CD4-positive, alpha-beta T cell (primary cell): ENCODE measurements at regions of chr6 and their contacts with region 1.

Region 1: DNA sequence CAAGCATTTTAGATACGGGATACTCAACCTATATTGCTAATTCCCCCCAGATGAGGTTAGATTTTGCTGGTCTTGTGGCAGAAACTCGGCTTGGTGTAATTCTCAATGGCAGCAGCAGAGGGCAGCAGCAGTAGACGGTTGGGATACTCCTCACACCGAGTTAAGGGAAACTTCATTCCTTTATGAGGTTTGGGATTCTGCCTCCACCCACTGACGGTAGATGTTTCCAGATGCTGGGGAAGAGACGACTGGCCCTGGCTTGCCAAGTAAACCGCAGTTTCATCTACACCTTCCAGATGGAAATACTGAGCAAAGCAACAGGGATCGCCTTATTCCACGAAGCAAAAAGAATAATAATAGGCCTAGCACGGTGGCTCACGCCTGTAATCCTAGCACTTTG is 8.2 kb upstream of the TBC1D7 start:
- DNase-seq: peak; percentile 54 to 84 (median 70)
- ATAC-seq: peak; percentile 87
- H3K4me3 ChIP-seq: no peak overlapping the region
- H3K4me3 Mint-ChIP-seq: no peak overlapping the region
- H3K27ac ChIP-seq: no peak overlapping the region
- H3K27ac Mint-ChIP-seq: no peak overlapping the region
- H3K4me1 ChIP-seq: peaks cover 6% of the 10 kb centered on the region
- H3K4me1 Mint-ChIP-seq: peaks cover 10% of the 10 kb centered on the region
- H3K27me3 ChIP-seq: no peaks in the 10 kb centered on the region
- H3K27me3 Mint-ChIP-seq: no peaks in the 10 kb centered on the region
- CTCF ChIP-seq: peak; percentile 93

Region 2: GRCh38 chr6:13355043-13355951 is 18.7 kb after region 1 on chr6:
- CTCF ChIA-PET with region 1: no interaction called
- POLR2A ChIA-PET with region 1: interaction called, 3 read pairs
- intact Hi-C with region 1: loop called in 1 of 2 experiments (anchors 1 kb)
- DNase-seq: peak in 4 of 14 experiments; percentile 20 to 73 (median 58)
- ATAC-seq: peak; percentile 69
- H3K4me3 ChIP-seq: peak overlapping the region; percentile 43
- H3K4me3 Mint-ChIP-seq: peak overlapping the region; percentile 81
- H3K27ac ChIP-seq: peak overlapping the region; percentile 60 to 65
- H3K27ac Mint-ChIP-seq: peak overlapping the region; percentile 89
- H3K4me1 ChIP-seq: peaks cover 30% of the 10 kb centered on the region
- H3K4me1 Mint-ChIP-seq: peaks cover 41% of the 10 kb centered on the region
- H3K27me3 ChIP-seq: no peaks in the 10 kb centered on the region
- H3K27me3 Mint-ChIP-seq: no peaks in the 10 kb centered on the region
- CTCF ChIP-seq: no peak

Region 3: GRCh38 chr6:13375360-13375878 is 38.9 kb after region 1 on chr6:
- CTCF ChIA-PET with region 1: no interaction called
- POLR2A ChIA-PET with region 1: no interaction called
- intact Hi-C with region 1: no loop called
- DNase-seq: peak in 5 of 14 experiments; percentile 5 to 57 (median 16)
- ATAC-seq: peak; percentile 37
- H3K4me3 ChIP-seq: no peak overlapping the region
- H3K4me3 Mint-ChIP-seq: no peak overlapping the region
- H3K27ac ChIP-seq: no peak overlapping the region
- H3K27ac Mint-ChIP-seq: no peak overlapping the region
- H3K4me1 ChIP-seq: peaks cover 8% of the 10 kb centered on the region
- H3K4me1 Mint-ChIP-seq: peaks cover 4% of the 10 kb centered on the region
- H3K27me3 ChIP-seq: no peaks in the 10 kb centered on the region
- H3K27me3 Mint-ChIP-seq: no peaks in the 10 kb centered on the region
- CTCF ChIP-seq: no peak

Region 4: GRCh38 chr6:13454286-13455221 is 118.0 kb after region 1 on chr6:
- CTCF ChIA-PET with region 1: no interaction called
- POLR2A ChIA-PET with region 1: no interaction called
- intact Hi-C with region 1: loop called (anchors 2 to 10 kb)
- DNase-seq: peak; percentile 25 to 86 (median 58)
- ATAC-seq: peak; percentile 81
- H3K4me3 ChIP-seq: peak overlapping the region; percentile 12
- H3K4me3 Mint-ChIP-seq: peak overlapping the region; percentile 60
- H3K27ac ChIP-seq: peak overlapping the region; percentile 1 to 6
- H3K27ac Mint-ChIP-seq: peak overlapping the region; percentile 88
- H3K4me1 ChIP-seq: peaks cover 21% of the 10 kb centered on the region
- H3K4me1 Mint-ChIP-seq: peaks cover 27% of the 10 kb centered on the region
- H3K27me3 ChIP-seq: no peaks in the 10 kb centered on the region
- H3K27me3 Mint-ChIP-seq: no peaks in the 10 kb centered on the region
- CTCF ChIP-seq: peak; percentile 57

Region 5: DNA sequence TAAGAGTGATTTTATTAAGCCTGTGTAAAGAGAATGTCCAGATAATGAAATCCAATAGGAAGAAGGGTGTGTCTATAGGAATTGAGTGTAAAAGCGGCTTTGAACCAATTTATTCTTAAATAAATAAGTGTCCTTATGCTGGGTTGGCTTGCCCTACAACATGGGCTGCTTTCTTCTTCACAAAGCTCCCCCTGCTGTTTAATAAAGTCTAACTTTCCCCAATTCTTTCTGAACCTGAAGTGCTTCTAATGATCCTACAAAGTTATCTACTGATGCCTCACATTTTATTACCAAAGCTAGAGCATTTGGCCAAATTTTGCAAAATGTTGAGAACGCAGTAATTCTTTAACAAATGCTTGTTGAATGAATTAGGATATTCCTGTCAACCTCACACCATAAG is 201.5 kb after region 1 on chr6:
- CTCF ChIA-PET with region 1: no interaction called
- POLR2A ChIA-PET with region 1: no interaction called
- intact Hi-C with region 1: loop called (anchors 1 kb)
- DNase-seq: peak in 4 of 14 experiments; percentile 10 to 55 (median 49)
- ATAC-seq: no peak
- H3K4me3 ChIP-seq: no peak overlapping the region
- H3K4me3 Mint-ChIP-seq: no peak overlapping the region
- H3K27ac ChIP-seq: no peak overlapping the region
- H3K27ac Mint-ChIP-seq: no peak overlapping the region
- H3K4me1 ChIP-seq: no peaks in the 10 kb centered on the region
- H3K4me1 Mint-ChIP-seq: no peaks in the 10 kb centered on the region
- H3K27me3 ChIP-seq: no peaks in the 10 kb centered on the region
- H3K27me3 Mint-ChIP-seq: no peaks in the 10 kb centered on the region
- CTCF ChIP-seq: peak; percentile 60

Region 6: GRCh38 chr6:14066782-14067406 is 730.3 kb after region 1 on chr6:
- CTCF ChIA-PET with region 1: interaction called, 3 read pairs
- POLR2A ChIA-PET with region 1: no interaction called
- intact Hi-C with region 1: loop called (anchors 1 to 10 kb)
- DNase-seq: peak in 4 of 14 experiments; percentile 24 to 76 (median 70)
- ATAC-seq: peak; percentile 81
- H3K4me3 ChIP-seq: no peak overlapping the region
- H3K4me3 Mint-ChIP-seq: no peak overlapping the region
- H3K27ac ChIP-seq: no peak overlapping the region
- H3K27ac Mint-ChIP-seq: no peak overlapping the region
- H3K4me1 ChIP-seq: no peaks in the 10 kb centered on the region
- H3K4me1 Mint-ChIP-seq: no peaks in the 10 kb centered on the region
- H3K27me3 ChIP-seq: peaks cover 0 to 5% of the 10 kb centered on the region in 2 experiments
- H3K27me3 Mint-ChIP-seq: peaks cover 6% of the 10 kb centered on the region
- CTCF ChIP-seq: peak; percentile 70